ENCODE measurements at regions of chr12 and their contacts with region 1.

Region 1: DNA sequence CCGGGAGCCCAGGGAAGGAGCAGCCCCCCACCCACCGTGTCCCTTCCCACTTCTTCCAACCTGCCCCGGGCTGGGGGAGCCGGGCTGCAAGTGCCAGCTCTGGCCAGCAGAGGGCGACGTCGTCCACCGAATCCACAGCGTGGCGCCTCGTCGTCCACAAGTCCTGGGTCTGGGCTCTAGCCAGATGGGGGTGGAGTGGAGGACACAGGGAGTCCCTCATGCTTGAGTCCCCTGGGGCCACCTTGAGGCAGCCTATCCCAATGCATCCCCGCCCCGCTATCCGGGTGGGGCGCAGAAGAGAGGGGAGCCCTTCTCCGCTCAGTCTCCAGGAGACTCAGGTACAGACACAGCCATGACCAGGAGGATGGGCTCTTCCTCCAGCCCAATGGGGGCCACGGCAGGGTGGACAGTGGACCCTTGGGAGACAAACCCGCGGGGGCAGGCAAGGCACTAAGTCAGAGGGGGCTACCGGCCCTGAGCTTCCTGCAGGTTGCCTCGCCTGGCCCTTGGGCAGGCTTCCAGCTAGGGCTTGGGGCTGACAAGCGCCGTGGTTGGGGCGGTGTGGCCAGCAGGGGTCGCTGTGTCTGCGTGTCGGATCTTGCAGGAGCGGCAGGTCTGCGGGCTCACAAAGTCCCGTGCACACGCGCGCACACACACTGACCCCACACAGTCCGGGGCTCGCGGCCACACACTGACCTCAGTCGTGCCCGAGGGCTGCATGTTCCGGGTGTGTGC is 5.5 kb downstream of the AQP5 start:
- DNase-seq: peak; percentile 84 to 92 (median 88)
- H3K4me3 ChIP-seq: peak overlapping the region; percentile 68
- H3K4me3 Mint-ChIP-seq: peak overlapping the region; percentile 21 to 87 (median 77)
- H3K27ac ChIP-seq: no peak overlapping the region
- H3K27ac Mint-ChIP-seq: no peak overlapping the region
- H3K4me1 ChIP-seq: peaks cover 5% of the 10 kb centered on the region
- H3K4me1 Mint-ChIP-seq: peaks cover 0 to 11% (median 4%) of the 10 kb centered on the region in 3 donors
- H3K27me3 ChIP-seq: peaks cover 25% of the 10 kb centered on the region
- H3K27me3 Mint-ChIP-seq: peaks cover 25 to 40% of the 10 kb centered on the region in 2 donors

Region 2: DNA sequence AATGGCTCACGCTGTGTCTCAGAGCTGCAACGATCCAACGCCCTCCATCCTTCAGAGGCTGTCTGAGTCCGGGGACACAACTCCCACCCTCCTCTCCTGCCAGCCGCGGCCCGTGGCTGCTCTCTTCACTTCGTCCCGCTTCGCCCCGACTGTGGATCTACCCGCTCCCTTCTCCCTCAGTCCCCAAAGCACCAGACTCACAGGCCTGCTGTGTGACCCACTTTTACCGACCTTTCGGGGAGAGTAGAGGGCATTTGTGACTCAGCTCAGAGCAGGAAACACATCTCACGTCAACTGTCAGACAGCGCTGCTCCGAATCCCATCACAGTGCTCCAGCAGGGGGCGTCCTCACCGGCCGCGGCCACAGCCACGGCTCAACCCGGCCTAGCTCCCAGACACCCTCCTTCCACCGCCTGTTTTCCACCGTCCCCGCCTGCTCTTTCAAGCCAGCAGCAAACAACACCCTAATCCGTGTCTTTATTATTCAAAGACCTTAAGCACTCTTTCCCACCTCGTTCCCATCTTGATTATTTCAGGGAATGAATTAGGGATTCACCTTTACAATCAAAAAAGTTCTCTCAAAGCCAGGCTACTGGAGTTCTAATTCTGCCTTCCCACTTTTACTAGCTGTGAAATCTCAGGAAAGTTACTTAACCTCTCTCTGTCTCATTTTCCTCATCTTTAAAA is 21.7 kb before region 1 on chr12:
- CTCF ChIA-PET with region 1: interaction called, 23 read pairs
- POLR2A ChIA-PET with region 1: interaction called, 9 read pairs
- DNase-seq: peak; percentile 54 to 80 (median 68)
- H3K4me3 ChIP-seq: peak overlapping the region; percentile 39
- H3K4me3 Mint-ChIP-seq: peak overlapping the region; percentile 41 to 86 (median 80)
- H3K27ac ChIP-seq: no peak overlapping the region
- H3K27ac Mint-ChIP-seq: peak overlapping the region in 6 of 8 donors; percentile 48 to 94 (median 85)
- H3K4me1 ChIP-seq: peaks cover 9% of the 10 kb centered on the region
- H3K4me1 Mint-ChIP-seq: peaks cover 11 to 21% (median 16%) of the 10 kb centered on the region in 3 donors
- H3K27me3 ChIP-seq: no peaks in the 10 kb centered on the region
- H3K27me3 Mint-ChIP-seq: peaks cover 4 to 22% of the 10 kb centered on the region in 2 donors

Region 3: DNA sequence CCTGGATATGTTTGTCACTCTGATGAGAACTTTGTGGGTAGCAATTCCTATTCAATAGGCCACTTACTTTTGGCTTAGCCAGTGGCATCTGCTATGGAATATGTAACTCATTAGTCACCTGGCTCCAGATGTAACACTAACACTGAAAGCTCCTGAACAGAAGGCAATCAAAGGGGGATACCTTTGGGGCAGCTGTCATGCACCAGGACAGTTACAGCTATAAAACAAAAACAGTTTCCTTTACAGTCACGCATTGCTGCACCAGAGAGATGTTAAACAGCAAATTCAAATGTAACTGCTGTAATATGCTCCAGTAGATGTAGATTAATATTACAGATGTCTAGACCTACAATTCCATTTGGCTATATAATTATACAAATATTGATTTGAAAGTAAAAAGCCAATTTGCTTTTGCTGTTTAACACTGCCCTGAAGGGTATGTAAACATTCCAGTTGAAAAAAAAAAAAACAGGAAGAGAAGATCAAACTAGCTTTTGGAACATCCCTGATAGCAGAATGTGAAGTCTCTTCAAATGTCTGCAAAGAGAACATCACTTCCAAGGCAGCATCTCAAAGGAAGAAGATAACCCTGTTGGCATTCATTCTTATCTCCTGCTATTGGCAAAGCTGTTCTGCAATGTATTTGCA is 39.7 kb after region 1 on chr12:
- CTCF ChIA-PET with region 1: interaction called, 10 read pairs
- POLR2A ChIA-PET with region 1: no interaction called
- DNase-seq: no peak
- H3K4me3 ChIP-seq: no peak overlapping the region
- H3K4me3 Mint-ChIP-seq: no peak overlapping the region
- H3K27ac ChIP-seq: no peak overlapping the region
- H3K27ac Mint-ChIP-seq: peak overlapping the region in 1 of 8 donors; percentile 14
- H3K4me1 ChIP-seq: no peaks in the 10 kb centered on the region
- H3K4me1 Mint-ChIP-seq: peaks cover 4 to 12% (median 4%) of the 10 kb centered on the region in 3 donors
- H3K27me3 ChIP-seq: no peaks in the 10 kb centered on the region
- H3K27me3 Mint-ChIP-seq: no peaks in the 10 kb centered on the region

Region 4: GRCh38 chr12:50055831-50056638 is 88.8 kb after region 1 on chr12:
- CTCF ChIA-PET with region 1: interaction called, 41 read pairs
- POLR2A ChIA-PET with region 1: no interaction called
- DNase-seq: peak; percentile 34 to 68 (median 38)
- H3K4me3 ChIP-seq: peak overlapping the region; percentile 44
- H3K4me3 Mint-ChIP-seq: peak overlapping the region; percentile 55 to 91 (median 74)
- H3K27ac ChIP-seq: no peak overlapping the region
- H3K27ac Mint-ChIP-seq: peak overlapping the region in 1 of 8 donors; percentile 90
- H3K4me1 ChIP-seq: peaks cover 33% of the 10 kb centered on the region
- H3K4me1 Mint-ChIP-seq: peaks cover 27 to 48% (median 32%) of the 10 kb centered on the region in 3 donors
- H3K27me3 ChIP-seq: peaks cover 19% of the 10 kb centered on the region
- H3K27me3 Mint-ChIP-seq: peaks cover 51 to 55% of the 10 kb centered on the region in 2 donors

Region 5: GRCh38 chr12:50074936-50075807 is 108.0 kb after region 1 on chr12:
- CTCF ChIA-PET with region 1: interaction called, 59 read pairs
- POLR2A ChIA-PET with region 1: no interaction called
- DNase-seq: peak; percentile 60 to 85 (median 71)
- H3K4me3 ChIP-seq: no peak overlapping the region
- H3K4me3 Mint-ChIP-seq: no peak overlapping the region
- H3K27ac ChIP-seq: no peak overlapping the region
- H3K27ac Mint-ChIP-seq: peak overlapping the region in 3 of 8 donors; percentile 11 to 74 (median 39)
- H3K4me1 ChIP-seq: peaks cover 4% of the 10 kb centered on the region
- H3K4me1 Mint-ChIP-seq: peaks cover 5 to 9% (median 5%) of the 10 kb centered on the region in 3 donors
- H3K27me3 ChIP-seq: no peaks in the 10 kb centered on the region
- H3K27me3 Mint-ChIP-seq: peaks cover 3 to 8% of the 10 kb centered on the region in 2 donors

Measured in CD8-positive, alpha-beta memory T cell (primary cell).